Panc1 (cell line): ENCODE measurements at regions of chr12 and their contacts with region 1.

Region 1: DNA sequence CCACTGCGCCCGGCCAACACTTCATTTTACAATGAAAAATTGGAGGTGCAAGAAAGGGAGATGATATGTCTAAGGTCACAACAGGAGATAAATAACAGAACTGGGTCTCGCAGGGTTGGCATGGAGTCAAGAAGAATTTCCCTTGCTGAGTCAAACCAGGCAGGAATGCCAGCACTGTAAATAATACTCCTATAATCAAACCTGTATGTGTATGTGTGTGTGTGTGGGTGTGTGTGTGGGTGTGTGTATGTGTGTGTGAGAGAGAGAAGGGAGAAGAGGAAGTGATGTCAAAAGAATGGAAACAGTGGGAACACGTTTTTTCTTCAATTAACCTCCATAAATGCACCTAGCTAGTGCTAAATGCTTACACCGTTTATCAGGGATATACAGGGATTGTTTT is 70.4 kb downstream of the TMEM116 start:
- DNase-seq: no peak
- ATAC-seq: no peak
- H3K4me3 ChIP-seq: no peak overlapping the region
- H3K27ac ChIP-seq: no peak overlapping the region
- H3K4me1 ChIP-seq: no peaks in the 10 kb centered on the region
- H3K27me3 ChIP-seq: no peaks in the 10 kb centered on the region
- CTCF ChIP-seq: no peak

Region 2: DNA sequence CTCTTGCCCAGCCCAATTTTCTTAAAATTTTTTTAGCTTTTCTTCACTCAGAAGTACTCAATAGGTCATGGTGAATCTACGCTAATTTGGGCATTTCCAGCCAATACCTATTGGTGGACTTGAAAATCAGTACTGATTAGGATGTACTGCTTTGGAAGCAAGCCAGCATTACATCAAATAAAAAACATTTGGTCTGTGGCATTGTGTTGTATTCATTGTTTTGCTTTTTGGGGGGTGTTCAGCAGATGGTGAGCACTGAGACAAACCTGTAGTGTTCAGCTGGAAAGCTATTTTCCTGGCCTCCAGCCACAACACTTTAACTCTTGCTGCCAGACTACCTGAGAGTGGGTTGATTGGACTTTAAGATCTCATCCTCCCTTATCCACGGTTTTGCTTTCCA is 96.5 kb before region 1 on chr12:
- CTCF ChIA-PET with region 1: interaction called, 3 read pairs
- POLR2A ChIA-PET with region 1: interaction called, 13 read pairs
- in situ Hi-C with region 1: no loop called
- intact Hi-C with region 1: no loop called
- DNase-seq: no peak
- ATAC-seq: no peak
- H3K4me3 ChIP-seq: no peak overlapping the region
- H3K27ac ChIP-seq: no peak overlapping the region
- H3K4me1 ChIP-seq: peaks cover 8% of the 10 kb centered on the region; the same call in 1 of the 2 replicates
- H3K27me3 ChIP-seq: no peaks in the 10 kb centered on the region
- CTCF ChIP-seq: no peak

Region 3: DNA sequence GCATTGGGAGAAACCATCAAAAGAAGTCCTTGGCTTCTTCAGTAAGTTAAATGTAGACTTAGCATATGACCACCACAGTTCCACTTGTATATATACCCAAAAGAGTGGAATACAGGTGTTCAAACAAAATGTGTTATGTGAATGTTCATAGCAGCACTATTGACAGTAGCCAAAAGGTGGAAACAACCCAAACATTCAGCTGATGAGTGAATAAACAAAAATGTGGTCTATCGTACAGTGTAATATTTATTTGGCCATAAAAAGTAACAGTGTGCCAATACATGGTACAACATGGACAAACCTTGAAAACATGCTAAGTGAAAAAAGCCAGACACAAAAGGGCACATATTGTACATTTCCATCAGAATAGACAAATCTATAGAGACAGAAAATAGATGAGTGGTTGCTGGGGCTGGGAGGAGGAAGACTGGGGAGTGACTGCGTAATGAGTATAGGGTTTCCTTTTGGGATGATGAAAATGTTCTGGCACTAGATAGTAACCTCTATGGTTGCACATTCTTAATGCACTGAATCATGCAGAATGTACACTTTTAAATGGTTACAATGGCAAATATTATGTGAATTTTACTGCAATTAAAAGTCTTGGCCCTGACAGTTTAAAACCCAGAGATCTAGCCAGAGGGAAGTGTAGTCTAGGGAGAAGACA is 76.1 kb after region 1 on chr12:
- CTCF ChIA-PET with region 1: interaction called, 9 read pairs
- POLR2A ChIA-PET with region 1: interaction called, 9 read pairs
- in situ Hi-C with region 1: no loop called
- intact Hi-C with region 1: loop called (anchors 5 kb)
- DNase-seq: no peak
- ATAC-seq: no peak
- H3K4me3 ChIP-seq: no peak overlapping the region
- H3K27ac ChIP-seq: no peak overlapping the region
- H3K4me1 ChIP-seq: peaks cover 13% of the 10 kb centered on the region
- H3K27me3 ChIP-seq: no peaks in the 10 kb centered on the region
- CTCF ChIP-seq: no peak

Region 4: DNA sequence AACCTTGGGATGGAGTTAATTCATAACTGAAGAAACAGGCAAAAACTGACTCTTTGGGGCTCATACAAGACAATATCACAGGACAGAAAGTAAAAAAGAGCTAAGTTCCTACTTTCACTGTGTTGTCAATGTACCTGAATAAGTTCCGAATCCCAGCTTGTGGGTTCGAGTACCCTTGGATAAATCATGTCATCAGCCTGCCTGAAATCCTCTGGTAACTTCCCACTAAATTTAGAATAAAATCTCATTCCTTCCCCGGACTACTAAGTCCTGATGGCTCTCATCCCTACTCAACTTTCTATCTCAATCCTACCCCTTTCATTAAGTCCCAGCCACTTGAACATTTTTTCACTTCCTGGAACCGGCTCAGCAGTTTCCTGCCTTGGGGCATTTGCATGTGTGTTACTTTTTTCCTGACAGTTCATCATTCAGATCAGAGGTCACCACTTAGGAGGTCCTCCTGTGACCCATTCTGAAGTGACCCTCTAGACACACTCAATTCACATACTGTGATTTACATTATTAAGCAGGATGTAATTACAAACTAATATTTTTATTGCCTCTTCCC is 83.3 kb after region 1 on chr12:
- CTCF ChIA-PET with region 1: interaction called, 6 read pairs
- POLR2A ChIA-PET with region 1: no interaction called
- in situ Hi-C with region 1: no loop called
- intact Hi-C with region 1: loop called (anchors 1 kb)
- DNase-seq: no peak
- ATAC-seq: no peak
- H3K4me3 ChIP-seq: no peak overlapping the region
- H3K27ac ChIP-seq: no peak overlapping the region
- H3K4me1 ChIP-seq: no peaks in the 10 kb centered on the region
- H3K27me3 ChIP-seq: no peaks in the 10 kb centered on the region
- CTCF ChIP-seq: no peak

Region 5: GRCh38 chr12:112097641-112098040 is 155.1 kb after region 1 on chr12:
- CTCF ChIA-PET with region 1: no interaction called
- POLR2A ChIA-PET with region 1: no interaction called
- in situ Hi-C with region 1: no loop called
- intact Hi-C with region 1: no loop called
- DNase-seq: no peak
- ATAC-seq: peak; percentile 32; the same call in 1 of the 2 replicates
- H3K4me3 ChIP-seq: no peak overlapping the region
- H3K27ac ChIP-seq: no peak overlapping the region
- H3K4me1 ChIP-seq: peaks cover 8% of the 10 kb centered on the region; the same call in 1 of the 2 replicates
- H3K27me3 ChIP-seq: no peaks in the 10 kb centered on the region
- CTCF ChIP-seq: no peak

Region 6: GRCh38 chr12:112108201-112109079 is 165.9 kb after region 1 on chr12 and contains the start of gene NAA25:
- CTCF ChIA-PET with region 1: interaction called, 14 read pairs
- POLR2A ChIA-PET with region 1: no interaction called
- in situ Hi-C with region 1: no loop called
- intact Hi-C with region 1: no loop called
- DNase-seq: peak; percentile 78
- ATAC-seq: peak; percentile 84
- H3K4me3 ChIP-seq: peak within 1 kb of the TSS; percentile 88 to 93
- H3K27ac ChIP-seq: peak within 1 kb of the TSS; percentile 100
- H3K4me1 ChIP-seq: peaks cover 34% of the 10 kb centered on the region
- H3K27me3 ChIP-seq: no peaks in the 10 kb centered on the region
- CTCF ChIP-seq: no peak
- total RNA-seq, gene NAA25: 32.2 TPM